Common myeloid progenitor, CD34-positive (primary cell): ENCODE measurements at regions of chr18 and their contacts with region 1.

Region 1: GRCh38 chr18:9613550-9614400 is 584 bp downstream of the PPP4R1 start:
- DNase-seq: peak; percentile 53 to 77 (median 64)
- H3K4me3 ChIP-seq: peak overlapping the region; percentile 70 to 89 (median 81)
- H3K27ac ChIP-seq: peak overlapping the region; percentile 78 to 88
- H3K4me1 ChIP-seq: peaks cover 12 to 38% (median 26%) of the 10 kb centered on the region in 4 experiments
- H3K27me3 ChIP-seq: no peaks in the 10 kb centered on the region

Region 2: DNA sequence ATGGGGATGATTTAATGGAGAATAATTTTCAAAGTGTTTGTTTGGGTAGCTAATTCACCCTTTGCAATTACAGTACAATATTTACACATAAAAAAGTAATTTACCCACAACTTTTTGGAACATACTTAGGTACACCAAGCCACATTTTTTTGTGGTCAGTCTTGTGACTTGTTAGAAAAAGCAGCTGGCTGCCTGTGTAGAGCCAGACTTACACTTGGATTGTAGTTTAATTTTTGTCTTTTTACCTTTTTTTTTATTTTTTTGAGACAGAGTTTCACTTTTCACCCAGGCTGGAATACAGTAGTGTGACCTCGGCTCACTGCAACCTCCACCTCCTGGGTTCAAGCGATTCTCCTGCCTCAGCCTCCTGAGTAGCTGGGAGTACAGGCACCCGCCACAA is 93.1 kb before region 1 on chr18:
- CTCF ChIA-PET with region 1: no interaction called
- POLR2A ChIA-PET with region 1: no interaction called
- DNase-seq: peak in 2 of 3 donors; percentile 46 to 68
- H3K4me3 ChIP-seq: no peak overlapping the region
- H3K27ac ChIP-seq: no peak overlapping the region
- H3K4me1 ChIP-seq: peaks cover 0 to 4% (median 0%) of the 10 kb centered on the region in 4 experiments
- H3K27me3 ChIP-seq: no peaks in the 10 kb centered on the region

Region 3: GRCh38 chr18:9771261-9771976 is 157.6 kb after region 1 on chr18:
- CTCF ChIA-PET with region 1: interaction called, 26 read pairs
- POLR2A ChIA-PET with region 1: no interaction called
- DNase-seq: peak; percentile 58 to 65 (median 58)
- H3K4me3 ChIP-seq: no peak overlapping the region
- H3K27ac ChIP-seq: no peak overlapping the region
- H3K4me1 ChIP-seq: peaks cover 0 to 36% (median 4%) of the 10 kb centered on the region in 4 experiments
- H3K27me3 ChIP-seq: no peaks in the 10 kb centered on the region

Region 4: DNA sequence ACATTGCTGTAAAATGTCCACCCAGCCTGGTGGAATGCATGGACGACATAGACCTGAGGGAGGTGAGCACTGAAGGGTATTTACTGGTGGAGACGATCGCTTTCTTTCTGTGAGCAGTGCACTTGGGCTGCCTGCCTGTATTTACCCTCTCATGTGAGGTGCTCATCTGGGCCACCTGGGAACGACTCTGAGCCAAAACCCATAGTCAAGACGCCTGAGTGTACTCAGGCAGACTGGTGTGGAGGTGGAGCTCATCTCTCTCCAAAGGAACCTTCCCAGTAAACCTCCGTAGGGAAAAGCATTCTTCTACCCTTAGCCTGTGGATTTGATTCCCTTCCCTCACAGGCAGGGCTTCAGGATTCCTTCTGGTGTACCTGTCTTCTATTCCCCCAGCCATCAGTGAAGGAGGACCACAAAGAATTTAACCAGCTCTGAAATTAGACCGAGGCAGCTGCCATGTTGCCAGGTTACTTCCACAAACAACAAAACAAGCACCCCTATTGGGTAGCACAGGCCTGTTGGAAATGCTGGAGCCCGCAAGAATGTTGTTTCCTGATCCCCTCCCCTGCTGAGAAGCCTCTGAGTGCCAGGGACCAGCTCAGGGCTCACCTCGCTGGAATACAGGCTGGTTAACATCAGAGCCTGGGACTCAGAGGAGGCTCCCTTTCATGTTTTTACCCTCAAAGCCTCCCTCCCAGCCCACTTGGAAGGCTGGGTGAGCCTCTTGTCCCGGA is 224.5 kb after region 1 on chr18:
- CTCF ChIA-PET with region 1: no interaction called
- POLR2A ChIA-PET with region 1: no interaction called
- DNase-seq: peak in 2 of 3 donors; percentile 67 to 70
- H3K4me3 ChIP-seq: no peak overlapping the region
- H3K27ac ChIP-seq: no peak overlapping the region
- H3K4me1 ChIP-seq: peaks cover 0 to 3% (median 0%) of the 10 kb centered on the region in 4 experiments
- H3K27me3 ChIP-seq: no peaks in the 10 kb centered on the region